Transverse colon (tissue), 4 donors: ENCODE measurements at regions of chr1 and their contacts with region 1.

Region 1: GRCh38 chr1:31564134-31564989 is 12.0 kb upstream of the TINAGL1 start:
- DNase-seq: peak; percentile 71
- H3K4me3 ChIP-seq: no peak overlapping the region
- H3K27ac ChIP-seq: peak overlapping the region; percentile 16 to 57 (median 35)
- H3K4me1 ChIP-seq: peaks cover 0 to 24% (median 0%) of the 10 kb centered on the region in 4 donors
- H3K27me3 ChIP-seq: peaks cover 13% of the 10 kb centered on the region
- CTCF ChIP-seq: peak; percentile 81 to 95 (median 87)
- EP300 ChIP-seq: no peak
- POLR2A ChIP-seq: no peak

Region 2: DNA sequence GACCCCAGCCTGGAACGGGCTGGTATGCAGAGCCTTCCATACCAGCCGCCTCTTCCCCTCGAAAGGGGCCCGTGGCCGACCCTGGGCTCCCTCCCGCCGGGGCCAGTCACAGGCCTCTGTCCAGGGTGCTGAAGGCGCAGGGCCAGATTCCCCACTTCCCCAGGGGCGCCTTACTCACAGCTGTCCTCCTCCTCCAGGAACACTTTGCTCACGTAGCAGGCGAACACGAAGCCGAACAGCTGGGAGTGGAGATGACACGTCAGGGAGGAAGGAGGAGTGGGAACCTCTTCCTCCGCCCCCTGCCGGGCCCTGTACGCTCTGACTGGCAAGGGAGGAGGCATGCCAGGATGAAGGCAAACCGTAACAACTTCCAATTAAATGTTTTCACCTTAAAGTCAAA is 382.0 kb before region 1 on chr1:
- in situ Hi-C with region 1: loop called in 1 of 4 experiments (anchors 25 kb)
- intact Hi-C with region 1: no loop called
- DNase-seq: peak; percentile 64
- H3K4me3 ChIP-seq: peak overlapping the region in 2 of 4 donors; percentile 11 to 20
- H3K27ac ChIP-seq: no peak overlapping the region
- H3K4me1 ChIP-seq: peaks cover 5 to 14% (median 12%) of the 10 kb centered on the region in 4 donors
- H3K27me3 ChIP-seq: peaks cover 47% of the 10 kb centered on the region
- CTCF ChIP-seq: no peak
- EP300 ChIP-seq: no peak
- POLR2A ChIP-seq: no peak

Region 3: DNA sequence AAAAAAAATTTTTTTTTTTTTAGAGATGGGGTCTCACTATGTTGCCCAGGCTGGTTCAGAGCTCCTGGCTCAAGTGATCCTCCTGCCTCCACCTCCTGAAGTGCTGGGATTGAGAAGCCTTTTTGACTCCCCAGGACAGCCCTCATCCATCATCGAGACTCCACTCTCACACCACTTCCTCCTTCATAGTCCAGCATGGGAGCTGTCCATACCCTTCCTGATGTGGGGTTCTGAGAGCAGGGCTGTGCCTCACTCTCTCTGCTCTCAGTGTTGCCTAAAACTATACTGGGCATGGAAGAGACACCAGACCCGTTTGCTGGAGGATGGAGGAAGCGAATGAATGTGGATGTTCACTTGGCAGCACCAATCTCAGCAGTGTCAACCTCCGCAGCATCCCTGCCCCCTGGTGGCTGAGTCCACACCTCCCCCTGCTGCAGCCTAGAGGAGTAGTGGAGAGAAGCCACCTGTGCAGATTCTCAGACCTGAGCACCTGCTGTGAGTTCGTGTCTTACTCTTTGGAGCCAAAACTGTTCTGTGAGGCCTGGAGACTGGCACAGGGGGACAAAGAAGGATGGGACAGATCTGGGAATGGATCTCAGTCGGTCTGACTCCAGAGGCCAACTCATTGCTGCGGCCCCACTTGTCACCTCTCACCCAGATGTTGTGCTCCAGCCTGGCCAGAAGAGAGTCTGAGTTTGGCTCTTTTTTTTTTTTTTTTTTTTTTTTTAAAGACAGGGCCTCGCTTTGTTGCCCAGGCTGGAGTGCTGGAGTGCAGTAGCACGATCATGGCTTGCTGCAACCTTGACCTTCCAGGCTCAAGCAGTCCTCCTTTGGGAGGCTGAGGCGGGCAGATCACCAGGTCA is 29.6 kb after region 1 on chr1:
- in situ Hi-C with region 1: no loop called
- intact Hi-C with region 1: loop called (anchors 2 kb)
- DNase-seq: peak; percentile 89
- H3K4me3 ChIP-seq: no peak overlapping the region
- H3K27ac ChIP-seq: no peak overlapping the region
- H3K4me1 ChIP-seq: peaks cover 0 to 16% (median 14%) of the 10 kb centered on the region in 4 donors
- H3K27me3 ChIP-seq: no peaks in the 10 kb centered on the region
- CTCF ChIP-seq: peak; percentile 76 to 94 (median 88)
- EP300 ChIP-seq: no peak
- POLR2A ChIP-seq: no peak

Region 4: GRCh38 chr1:31789259-31790065 is 225.1 kb after region 1 on chr1:
- in situ Hi-C with region 1: no loop called
- intact Hi-C with region 1: loop called (anchors 10 kb)
- DNase-seq: peak; percentile 98
- H3K4me3 ChIP-seq: peak overlapping the region; percentile 41 to 66 (median 53)
- H3K27ac ChIP-seq: peak overlapping the region; percentile 81 to 90 (median 88)
- H3K4me1 ChIP-seq: peaks cover 0 to 15% (median 6%) of the 10 kb centered on the region in 4 donors
- H3K27me3 ChIP-seq: no peaks in the 10 kb centered on the region
- CTCF ChIP-seq: peak; percentile 89 to 96 (median 92)
- EP300 ChIP-seq: no peak
- POLR2A ChIP-seq: no peak